Cardiac septum (tissue), 1 donor: ENCODE measurements at regions of chr1 and their contacts with region 1.

Region 1: GRCh38 chr1:244047621-244048471 is 3.2 kb upstream of the ZBTB18 start:
- DNase-seq: peak; percentile 100

Region 2: DNA sequence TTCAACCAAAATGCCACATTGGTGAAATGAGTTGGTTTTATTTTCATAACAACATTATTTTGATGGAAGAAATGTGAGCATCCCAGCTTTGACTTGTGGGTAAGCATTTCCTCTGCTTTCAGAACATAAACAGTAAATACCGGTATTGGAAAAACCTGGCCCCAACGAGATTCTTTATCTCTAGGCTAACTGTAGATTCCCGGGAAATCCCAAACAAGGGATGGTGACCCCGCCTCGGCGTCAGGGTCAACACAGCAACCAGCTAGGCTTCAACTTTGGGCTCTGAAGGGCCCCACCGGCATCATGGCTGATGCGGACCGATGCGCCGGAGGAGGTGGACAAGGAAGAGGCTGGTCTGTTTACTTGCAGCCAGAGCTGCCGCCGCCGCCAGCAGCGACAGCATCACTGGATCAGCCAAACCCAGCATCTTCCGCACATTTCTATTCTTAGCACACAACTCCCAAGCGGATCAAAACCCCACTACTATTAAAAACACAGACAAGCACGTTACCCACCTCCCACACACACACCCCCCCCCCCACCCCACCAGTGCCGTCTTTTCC is 198.9 kb before region 1 on chr1:
- intact Hi-C with region 1: loop called (anchors 5 kb)
- DNase-seq: peak; percentile 79

Region 3: GRCh38 chr1:244163861-244164562 is 116.2 kb after region 1 on chr1:
- intact Hi-C with region 1: loop called (anchors 5 kb)
- DNase-seq: no peak

Region 4: DNA sequence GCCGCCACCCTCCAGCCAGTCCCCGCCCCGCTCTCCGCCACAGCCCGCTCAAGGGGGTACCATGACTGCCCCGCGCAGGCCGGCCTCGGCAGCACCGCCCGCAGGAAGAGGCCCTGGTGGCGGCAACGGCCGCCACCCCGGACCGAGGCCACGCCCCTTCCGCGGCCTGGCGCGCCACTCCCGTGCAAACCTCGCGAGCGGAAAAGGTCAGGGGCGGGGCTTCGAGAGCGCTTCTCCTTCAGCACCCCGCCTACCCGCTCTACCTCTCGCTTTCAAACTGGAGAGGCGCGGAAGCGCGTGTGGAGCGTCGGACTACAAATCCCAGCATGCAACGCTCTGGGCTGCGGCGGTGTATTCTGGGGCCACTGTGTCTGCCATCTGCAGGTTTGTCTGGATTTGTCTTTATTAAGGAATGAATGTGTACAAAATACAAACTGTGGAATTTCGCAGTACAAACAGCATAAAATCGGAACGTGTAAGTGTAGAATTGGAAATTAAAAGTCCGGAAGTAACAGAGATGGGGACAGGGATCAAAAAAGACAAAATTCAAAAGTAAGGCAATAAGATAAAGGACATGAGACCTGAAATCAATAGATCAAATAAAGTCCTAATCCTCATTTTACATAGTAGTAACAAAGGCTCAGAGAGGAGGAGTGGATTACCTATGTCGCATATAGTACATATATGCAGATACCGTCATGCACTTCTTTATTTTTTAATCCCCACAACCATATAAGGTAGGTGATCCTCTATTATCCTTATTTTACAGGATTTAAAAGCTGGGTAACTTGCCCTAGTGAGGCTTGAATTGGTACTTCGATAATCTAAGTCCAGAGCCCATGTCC is 404.3 kb after region 1 on chr1:
- intact Hi-C with region 1: loop called (anchors 5 kb)
- DNase-seq: peak; percentile 99